ENCODE measurements at regions of chr4 and their contacts with region 1.

Region 1: GRCh38 chr4:78923464-78924312 is 15.6 kb downstream of the PAQR3 start:
- DNase-seq: no peak
- H3K4me3 Mint-ChIP-seq: no peak overlapping the region
- H3K27ac Mint-ChIP-seq: no peak overlapping the region
- H3K4me1 Mint-ChIP-seq: no peaks in the 10 kb centered on the region
- H3K27me3 Mint-ChIP-seq: no peaks in the 10 kb centered on the region
- CTCF ChIP-seq: no peak

Region 2: DNA sequence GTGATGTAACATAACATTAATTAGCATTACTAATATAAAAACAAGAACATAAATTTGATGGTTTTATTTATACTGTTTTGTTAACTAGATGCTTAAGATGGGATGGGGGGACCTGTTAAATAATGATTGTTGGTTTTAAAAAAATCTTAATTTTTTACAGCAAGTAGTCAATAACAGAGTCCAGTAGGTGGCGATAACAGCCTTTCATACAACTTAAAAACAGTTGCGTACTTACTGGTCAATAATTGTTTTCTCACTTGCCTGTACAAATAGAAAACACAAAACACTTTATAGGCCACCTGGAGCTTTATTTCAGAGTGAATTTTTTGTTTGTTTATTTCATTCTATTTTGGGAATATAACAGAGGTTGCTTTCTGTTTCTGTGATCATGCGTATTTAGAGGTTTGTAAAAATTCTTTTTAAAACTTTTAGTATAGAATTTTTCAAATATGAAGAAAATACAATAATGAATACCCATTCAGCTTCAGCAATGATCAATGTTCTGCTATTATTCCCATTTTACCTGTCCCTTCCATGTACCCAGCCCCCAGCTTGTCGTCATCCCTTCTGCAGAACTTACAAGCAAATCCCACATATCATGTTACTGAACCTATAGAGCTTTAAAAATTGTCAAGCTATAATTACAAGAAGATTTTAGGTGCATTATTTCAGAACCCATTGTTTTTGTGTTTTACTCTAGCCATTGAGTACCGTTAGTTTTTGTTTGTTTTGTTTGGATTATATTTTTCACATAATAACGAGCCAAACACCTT is 963.9 kb before region 1 on chr4:
- CTCF ChIA-PET with region 1: no interaction called
- intact Hi-C with region 1: loop called (anchors 5 kb)
- DNase-seq: peak; percentile 18
- H3K4me3 Mint-ChIP-seq: no peak overlapping the region
- H3K27ac Mint-ChIP-seq: no peak overlapping the region
- H3K4me1 Mint-ChIP-seq: no peaks in the 10 kb centered on the region
- H3K27me3 Mint-ChIP-seq: no peaks in the 10 kb centered on the region
- CTCF ChIP-seq: peak; percentile 24

Region 3: GRCh38 chr4:78414116-78414515 is 509.6 kb before region 1 on chr4:
- CTCF ChIA-PET with region 1: no interaction called
- intact Hi-C with region 1: no loop called
- DNase-seq: no peak
- H3K4me3 Mint-ChIP-seq: no peak overlapping the region
- H3K27ac Mint-ChIP-seq: no peak overlapping the region
- H3K4me1 Mint-ChIP-seq: no peaks in the 10 kb centered on the region
- H3K27me3 Mint-ChIP-seq: no peaks in the 10 kb centered on the region
- CTCF ChIP-seq: no peak

Region 4: DNA sequence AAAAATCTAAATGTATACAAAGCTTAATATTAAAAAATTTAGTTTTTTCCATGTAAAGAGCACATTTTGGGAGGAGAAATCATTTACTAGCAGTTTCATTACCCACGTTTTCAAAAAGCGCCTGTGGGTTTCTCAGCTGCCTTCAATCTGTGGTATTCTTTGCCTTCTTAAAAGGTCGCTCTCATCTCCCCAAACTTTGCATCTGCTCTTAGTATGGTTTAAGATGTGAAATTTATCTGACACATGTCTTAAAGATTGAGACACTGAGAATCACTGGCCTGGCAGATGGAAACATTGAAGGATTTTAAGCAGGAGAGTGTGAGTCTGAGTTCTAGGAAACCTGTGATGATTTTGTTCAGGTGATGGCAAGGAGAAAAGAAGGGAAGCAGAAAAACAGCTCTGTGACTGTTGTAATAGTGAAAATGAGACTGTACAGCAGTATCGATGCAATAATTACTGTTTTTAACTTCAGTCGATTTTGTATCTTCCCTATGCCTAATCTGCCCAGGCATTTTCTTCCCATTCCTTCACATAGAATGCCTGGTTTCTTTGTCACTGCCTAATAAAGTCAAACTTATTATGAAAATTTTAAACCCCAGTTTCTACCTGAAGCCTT is 60.3 kb before region 1 on chr4:
- CTCF ChIA-PET with region 1: no interaction called
- intact Hi-C with region 1: no loop called
- DNase-seq: no peak
- H3K4me3 Mint-ChIP-seq: no peak overlapping the region
- H3K27ac Mint-ChIP-seq: no peak overlapping the region
- H3K4me1 Mint-ChIP-seq: peaks cover 8% of the 10 kb centered on the region
- H3K27me3 Mint-ChIP-seq: no peaks in the 10 kb centered on the region
- CTCF ChIP-seq: no peak

Region 5: GRCh38 chr4:78984593-78984992 is 60.9 kb after region 1 on chr4:
- CTCF ChIA-PET with region 1: no interaction called
- intact Hi-C with region 1: no loop called
- DNase-seq: no peak
- H3K4me3 Mint-ChIP-seq: no peak overlapping the region
- H3K27ac Mint-ChIP-seq: no peak overlapping the region
- H3K4me1 Mint-ChIP-seq: no peaks in the 10 kb centered on the region
- H3K27me3 Mint-ChIP-seq: peaks cover 12% of the 10 kb centered on the region
- CTCF ChIP-seq: no peak

Measured in Calu3 (cell line).